ENCODE measurements at regions of chr1 and their contacts with region 1.

Region 1: GRCh38 chr1:241499910-241500309 is 19.6 kb downstream of the FH start:
- DNase-seq: peak in 3 of 4 experiments; percentile 26 to 36 (median 30)
- ATAC-seq: peak; percentile 66; the same call in 2 of the 3 replicates
- H3K4me3 ChIP-seq: no peak overlapping the region
- H3K27ac ChIP-seq: no peak overlapping the region
- H3K4me1 ChIP-seq: no peaks in the 10 kb centered on the region
- H3K27me3 ChIP-seq: no peaks in the 10 kb centered on the region
- CTCF ChIP-seq: peak in 2 of 3 experiments; percentile 50 to 66; a peak in 3 of 6 replicates
- EP300 ChIP-seq: no peak
- POLR2A ChIP-seq: no peak
- RAD21 ChIP-seq: peak; percentile 61 to 65

Region 2: GRCh38 chr1:240732390-240732789 is 767.5 kb before region 1 on chr1:
- CTCF ChIA-PET with region 1: no interaction called
- POLR2A ChIA-PET with region 1: no interaction called
- in situ Hi-C with region 1: no loop called
- intact Hi-C with region 1: loop called (anchors 5 kb)
- DNase-seq: peak; percentile 41 to 50 (median 44)
- ATAC-seq: peak; percentile 93
- H3K4me3 ChIP-seq: no peak overlapping the region
- H3K27ac ChIP-seq: no peak overlapping the region
- H3K4me1 ChIP-seq: no peaks in the 10 kb centered on the region
- H3K27me3 ChIP-seq: no peaks in the 10 kb centered on the region
- CTCF ChIP-seq: peak; percentile 20 to 59 (median 58); a peak in 5 of 6 replicates
- EP300 ChIP-seq: no peak
- POLR2A ChIP-seq: no peak
- RAD21 ChIP-seq: peak; percentile 35 to 59; a peak in 3 of 4 replicates